ENCODE measurements at regions of chr9 and their contacts with region 1.

Region 1: DNA sequence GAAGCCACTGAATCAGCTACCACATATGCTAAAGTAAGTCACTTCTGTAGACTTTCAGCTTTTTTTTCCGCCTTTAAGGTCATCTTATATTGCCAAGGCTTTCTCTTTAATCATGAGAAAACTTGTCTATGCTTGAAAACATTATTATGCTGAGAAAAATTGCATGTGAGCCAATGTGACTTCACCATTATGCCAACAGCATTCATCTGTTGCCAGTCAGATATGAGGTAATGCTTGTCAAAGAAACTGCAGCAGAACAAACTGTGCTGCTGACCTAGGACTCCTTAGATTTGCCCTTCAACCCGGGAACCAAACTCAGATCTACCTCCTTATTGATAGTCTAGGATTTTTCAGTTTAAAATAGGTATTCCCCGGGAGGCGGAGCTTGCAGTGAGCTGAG is 34.3 kb downstream of the SLC44A1 start:
- DNase-seq: no peak
- H3K4me3 ChIP-seq: no peak overlapping the region
- H3K27ac ChIP-seq: peak overlapping the region; percentile 10
- H3K4me1 ChIP-seq: peaks cover 11% of the 10 kb centered on the region
- H3K27me3 ChIP-seq: no peaks in the 10 kb centered on the region
- CTCF ChIP-seq: no peak

Region 2: DNA sequence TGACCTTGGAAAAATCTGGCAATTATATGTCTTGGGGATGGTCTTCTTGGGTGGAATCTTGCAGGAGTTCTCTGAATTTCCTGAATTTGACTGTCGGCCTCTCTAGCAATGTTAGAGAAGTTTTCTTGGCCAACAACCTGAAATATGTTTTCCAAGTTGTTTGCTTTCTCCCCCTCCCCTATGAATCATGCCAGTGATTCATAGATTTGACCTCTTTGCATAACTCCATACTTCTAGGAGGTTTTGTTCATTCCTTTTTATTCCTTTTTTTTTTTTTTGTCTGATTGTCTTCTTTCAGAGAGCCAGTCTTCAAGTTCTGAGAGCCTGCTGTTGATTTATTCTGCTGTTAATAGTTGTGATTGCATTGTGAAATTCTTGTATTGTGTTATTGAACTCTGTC is 91.0 kb before region 1 on chr9:
- intact Hi-C with region 1: loop called (anchors 10 kb)
- DNase-seq: no peak
- H3K4me3 ChIP-seq: no peak overlapping the region
- H3K27ac ChIP-seq: no peak overlapping the region
- H3K4me1 ChIP-seq: no peaks in the 10 kb centered on the region
- H3K27me3 ChIP-seq: peaks cover 5% of the 10 kb centered on the region
- CTCF ChIP-seq: no peak

Region 3: GRCh38 chr9:105341434-105342144 is 62.8 kb after region 1 on chr9:
- intact Hi-C with region 1: no loop called
- DNase-seq: no peak
- H3K4me3 ChIP-seq: peak overlapping the region; percentile 5
- H3K27ac ChIP-seq: no peak overlapping the region
- H3K4me1 ChIP-seq: peaks cover 20% of the 10 kb centered on the region
- H3K27me3 ChIP-seq: no peaks in the 10 kb centered on the region
- CTCF ChIP-seq: no peak